A549 (cell line): ENCODE measurements at regions of chr1 and their contacts with region 1.

Region 1: GRCh38 chr1:157369808-157370521 is 182.3 kb downstream of the FCRL5 start:
- DNase-seq: peak; percentile 49 to 66
- ATAC-seq: peak; percentile 69 to 96; a peak in 5 of 6 replicates
- H3K4me3 ChIP-seq: no peak overlapping the region
- H3K27ac ChIP-seq: no peak overlapping the region
- H3K4me1 ChIP-seq: no peaks in the 10 kb centered on the region
- CTCF ChIP-seq: peak; percentile 75
- EP300 ChIP-seq: no peak
- POLR2A ChIP-seq: no peak
- RAD21 ChIP-seq: peak; percentile 73

Region 2: GRCh38 chr1:157357111-157357510 is 12.9 kb before region 1 on chr1:
- CTCF ChIA-PET with region 1: interaction called, 31 read pairs
- POLR2A ChIA-PET with region 1: no interaction called
- DNase-seq: no peak
- ATAC-seq: no peak
- H3K4me3 ChIP-seq: no peak overlapping the region
- H3K27ac ChIP-seq: no peak overlapping the region
- H3K4me1 ChIP-seq: no peaks in the 10 kb centered on the region
- CTCF ChIP-seq: no peak
- EP300 ChIP-seq: no peak
- POLR2A ChIP-seq: no peak
- RAD21 ChIP-seq: no peak

Region 3: DNA sequence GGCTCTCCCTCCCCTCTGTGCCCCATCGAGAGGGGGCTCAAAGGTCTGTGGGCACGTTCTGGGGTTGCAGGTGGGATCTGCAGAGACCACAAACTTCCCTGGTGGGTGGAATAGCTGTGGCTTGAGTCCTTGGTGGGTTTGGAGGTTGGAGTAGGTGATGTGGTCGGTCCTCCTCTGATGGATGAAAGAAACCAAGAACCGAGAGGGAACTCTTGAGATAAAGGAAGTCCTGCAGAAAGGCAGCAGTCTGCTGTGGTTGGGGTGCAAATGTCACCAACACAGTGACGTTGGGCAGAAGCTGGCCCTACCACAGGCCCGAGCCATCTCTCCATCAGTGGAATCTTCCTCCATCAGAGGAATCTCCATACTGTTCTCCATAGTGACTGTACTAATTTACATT is 10.6 kb after region 1 on chr1:
- CTCF ChIA-PET with region 1: interaction called, 18 read pairs
- POLR2A ChIA-PET with region 1: no interaction called
- DNase-seq: no peak
- ATAC-seq: no peak
- H3K4me3 ChIP-seq: no peak overlapping the region
- H3K27ac ChIP-seq: no peak overlapping the region
- H3K4me1 ChIP-seq: no peaks in the 10 kb centered on the region
- CTCF ChIP-seq: no peak
- EP300 ChIP-seq: no peak
- POLR2A ChIP-seq: no peak
- RAD21 ChIP-seq: no peak

Region 4: GRCh38 chr1:157490467-157491165 is 120.7 kb after region 1 on chr1:
- CTCF ChIA-PET with region 1: interaction called, 52 read pairs
- POLR2A ChIA-PET with region 1: no interaction called
- DNase-seq: peak; percentile 33 to 60
- ATAC-seq: peak; percentile 60 to 86
- H3K4me3 ChIP-seq: no peak overlapping the region
- H3K27ac ChIP-seq: no peak overlapping the region
- H3K4me1 ChIP-seq: no peaks in the 10 kb centered on the region
- CTCF ChIP-seq: peak; percentile 60
- EP300 ChIP-seq: no peak
- POLR2A ChIP-seq: no peak
- RAD21 ChIP-seq: peak; percentile 44 to 53

Region 5: DNA sequence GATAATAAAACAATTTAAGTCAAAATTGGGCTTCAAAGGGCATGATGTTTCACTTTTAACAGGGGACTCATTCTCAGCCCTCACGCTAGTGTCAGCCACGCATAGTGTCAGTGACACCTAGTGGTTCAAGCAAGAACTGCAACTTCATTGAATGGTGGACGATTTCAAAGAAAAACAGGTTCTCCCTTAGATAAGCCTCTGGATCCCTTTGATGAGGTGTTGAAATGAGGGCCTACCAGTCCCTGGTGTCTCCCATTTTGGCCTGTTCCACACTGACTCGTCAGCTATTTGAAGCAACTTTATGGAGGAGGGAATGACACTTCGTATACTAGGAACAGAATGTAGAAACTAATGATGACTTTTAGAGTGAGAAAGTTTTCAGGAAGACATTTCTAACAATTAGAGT is 126.2 kb after region 1 on chr1:
- CTCF ChIA-PET with region 1: interaction called, 52 read pairs
- POLR2A ChIA-PET with region 1: no interaction called
- DNase-seq: peak in 1 of 2 experiments; percentile 43
- ATAC-seq: peak; percentile 72 to 92
- H3K4me3 ChIP-seq: no peak overlapping the region
- H3K27ac ChIP-seq: no peak overlapping the region
- H3K4me1 ChIP-seq: no peaks in the 10 kb centered on the region
- CTCF ChIP-seq: peak; percentile 62
- EP300 ChIP-seq: no peak
- POLR2A ChIP-seq: no peak
- RAD21 ChIP-seq: peak; percentile 43 to 48; a peak in 3 of 5 replicates